Naive thymus-derived CD4-positive, alpha-beta T cell (primary cell): ENCODE measurements at regions of chr2 and their contacts with region 1.

Region 1: GRCh38 chr2:119759451-119760236 is at the start of gene PTPN4:
- DNase-seq: peak; percentile 88 to 98 (median 96)
- ATAC-seq: peak; percentile 97
- H3K4me3 ChIP-seq: peak within 1 kb of the TSS; percentile 89
- H3K4me3 Mint-ChIP-seq: peak within 1 kb of the TSS; percentile 87 to 97 (median 94)
- H3K27ac ChIP-seq: peak within 1 kb of the TSS; percentile 83
- H3K27ac Mint-ChIP-seq: peak within 1 kb of the TSS; percentile 60 to 95 (median 91)
- H3K4me1 ChIP-seq: peaks cover 25% of the 10 kb centered on the region in 2 donors
- H3K4me1 Mint-ChIP-seq: peaks cover 22 to 51% (median 39%) of the 10 kb centered on the region in 7 donors
- H3K27me3 ChIP-seq: no peaks in the 10 kb centered on the region
- H3K27me3 Mint-ChIP-seq: peaks cover 0 to 2% (median 0%) of the 10 kb centered on the region in 5 donors
- total RNA-seq, gene PTPN4: 59.9 to 122 (median 104) TPM

Region 2: DNA sequence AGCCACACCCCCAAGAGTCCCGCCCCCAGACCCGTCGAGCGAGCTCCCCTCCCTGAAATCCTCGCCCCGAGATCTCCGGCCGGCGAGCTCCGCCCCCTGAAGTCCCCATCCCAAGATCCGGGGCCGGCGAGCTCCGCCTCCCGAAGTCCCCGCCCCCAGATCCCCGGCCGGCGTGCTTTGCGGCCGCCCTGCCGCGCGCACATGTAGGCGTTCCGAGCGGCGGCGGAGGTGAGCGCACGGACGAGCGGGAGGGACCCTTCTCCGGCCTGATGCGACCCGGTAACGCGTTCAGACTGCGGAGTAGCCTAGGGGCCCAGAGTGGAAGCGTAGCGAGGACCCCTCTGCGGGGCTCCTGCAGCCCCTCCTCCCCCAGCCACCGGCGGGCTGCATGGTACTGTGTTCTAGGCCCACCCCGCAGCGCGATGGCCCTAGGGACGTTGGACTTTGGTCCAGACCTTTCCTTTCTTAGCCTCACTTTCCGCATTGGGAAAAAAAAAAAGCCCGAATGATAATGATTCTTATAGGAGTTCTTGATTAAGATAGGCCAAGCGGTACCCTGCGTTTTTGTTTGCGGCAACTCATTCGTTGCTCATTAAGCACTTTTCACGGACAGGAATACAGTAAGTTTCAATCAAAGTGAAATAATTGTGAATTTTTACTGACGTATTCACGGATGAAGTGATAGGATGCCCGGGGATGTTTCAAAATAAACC is 80.5 kb before region 1 on chr2 and contains the start of gene TMEM177:
- CTCF ChIA-PET with region 1: no interaction called
- POLR2A ChIA-PET with region 1: interaction called, 10 read pairs
- intact Hi-C with region 1: loop called (anchors 1 kb)
- DNase-seq: peak; percentile 72 to 96 (median 87)
- ATAC-seq: peak; percentile 91
- H3K4me3 ChIP-seq: peak within 1 kb of the TSS; percentile 95
- H3K4me3 Mint-ChIP-seq: peak within 1 kb of the TSS; percentile 87 to 96 (median 90)
- H3K27ac ChIP-seq: peak within 1 kb of the TSS; percentile 88
- H3K27ac Mint-ChIP-seq: peak within 1 kb of the TSS; percentile 58 to 99 (median 97)
- H3K4me1 ChIP-seq: peaks cover 0 to 15% of the 10 kb centered on the region in 2 donors
- H3K4me1 Mint-ChIP-seq: peaks cover 25 to 48% (median 38%) of the 10 kb centered on the region in 7 donors
- H3K27me3 ChIP-seq: no peaks in the 10 kb centered on the region
- H3K27me3 Mint-ChIP-seq: peaks cover 0 to 21% (median 0%) of the 10 kb centered on the region in 5 donors
- total RNA-seq, gene TMEM177: 5.5 to 38.1 (median 11.6) TPM

Region 3: DNA sequence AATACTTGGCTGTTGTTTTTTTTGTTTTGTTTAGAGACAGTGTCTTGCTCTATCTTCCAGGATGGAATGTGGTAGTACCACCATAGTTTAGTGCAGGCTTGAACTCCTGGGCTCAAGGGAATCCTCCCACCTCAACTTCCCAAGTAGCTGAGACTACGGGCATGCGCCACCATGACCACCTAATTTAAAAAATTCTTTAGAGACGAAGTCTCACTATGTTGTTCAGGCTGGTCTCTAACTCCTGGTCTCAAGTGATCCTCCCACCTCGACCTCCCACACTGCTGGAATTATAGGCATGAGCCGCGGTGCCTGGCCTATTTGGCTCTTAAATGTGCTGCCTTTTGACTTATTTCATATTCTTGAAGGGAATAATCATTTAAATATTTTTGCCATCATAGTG is 60.2 kb after region 1 on chr2:
- CTCF ChIA-PET with region 1: interaction called, 88 read pairs
- POLR2A ChIA-PET with region 1: interaction called, 16 read pairs
- intact Hi-C with region 1: loop called in 1 of 2 experiments (anchors 1 kb)
- DNase-seq: no peak
- ATAC-seq: no peak
- H3K4me3 ChIP-seq: no peak overlapping the region
- H3K4me3 Mint-ChIP-seq: no peak overlapping the region
- H3K27ac ChIP-seq: no peak overlapping the region
- H3K27ac Mint-ChIP-seq: peak overlapping the region in 6 of 9 donors; percentile 8 to 80 (median 34)
- H3K4me1 ChIP-seq: peaks cover 0 to 5% of the 10 kb centered on the region in 2 donors
- H3K4me1 Mint-ChIP-seq: peaks cover 16 to 72% (median 56%) of the 10 kb centered on the region in 7 donors
- H3K27me3 ChIP-seq: no peaks in the 10 kb centered on the region
- H3K27me3 Mint-ChIP-seq: no peaks in the 10 kb centered on the region

Region 4: GRCh38 chr2:120012771-120013596 is 253.3 kb after region 1 on chr2 and contains the start of gene EPB41L5:
- CTCF ChIA-PET with region 1: no interaction called
- POLR2A ChIA-PET with region 1: no interaction called
- intact Hi-C with region 1: loop called (anchors 1 kb)
- DNase-seq: peak; percentile 56 to 81 (median 67)
- ATAC-seq: peak; percentile 93
- H3K4me3 ChIP-seq: peak within 1 kb of the TSS; percentile 69
- H3K4me3 Mint-ChIP-seq: peak within 1 kb of the TSS; percentile 73 to 89 (median 86)
- H3K27ac ChIP-seq: peak within 1 kb of the TSS; percentile 70
- H3K27ac Mint-ChIP-seq: peak within 1 kb of the TSS in 8 of 9 donors; percentile 36 to 75 (median 70)
- H3K4me1 ChIP-seq: peaks cover 6% of the 10 kb centered on the region in 2 donors
- H3K4me1 Mint-ChIP-seq: peaks cover 8 to 37% (median 24%) of the 10 kb centered on the region in 7 donors
- H3K27me3 ChIP-seq: no peaks in the 10 kb centered on the region
- H3K27me3 Mint-ChIP-seq: peaks cover 0 to 20% (median 0%) of the 10 kb centered on the region in 5 donors
- total RNA-seq, gene EPB41L5: 2.2 to 9.3 (median 6.8) TPM

Region 5: DNA sequence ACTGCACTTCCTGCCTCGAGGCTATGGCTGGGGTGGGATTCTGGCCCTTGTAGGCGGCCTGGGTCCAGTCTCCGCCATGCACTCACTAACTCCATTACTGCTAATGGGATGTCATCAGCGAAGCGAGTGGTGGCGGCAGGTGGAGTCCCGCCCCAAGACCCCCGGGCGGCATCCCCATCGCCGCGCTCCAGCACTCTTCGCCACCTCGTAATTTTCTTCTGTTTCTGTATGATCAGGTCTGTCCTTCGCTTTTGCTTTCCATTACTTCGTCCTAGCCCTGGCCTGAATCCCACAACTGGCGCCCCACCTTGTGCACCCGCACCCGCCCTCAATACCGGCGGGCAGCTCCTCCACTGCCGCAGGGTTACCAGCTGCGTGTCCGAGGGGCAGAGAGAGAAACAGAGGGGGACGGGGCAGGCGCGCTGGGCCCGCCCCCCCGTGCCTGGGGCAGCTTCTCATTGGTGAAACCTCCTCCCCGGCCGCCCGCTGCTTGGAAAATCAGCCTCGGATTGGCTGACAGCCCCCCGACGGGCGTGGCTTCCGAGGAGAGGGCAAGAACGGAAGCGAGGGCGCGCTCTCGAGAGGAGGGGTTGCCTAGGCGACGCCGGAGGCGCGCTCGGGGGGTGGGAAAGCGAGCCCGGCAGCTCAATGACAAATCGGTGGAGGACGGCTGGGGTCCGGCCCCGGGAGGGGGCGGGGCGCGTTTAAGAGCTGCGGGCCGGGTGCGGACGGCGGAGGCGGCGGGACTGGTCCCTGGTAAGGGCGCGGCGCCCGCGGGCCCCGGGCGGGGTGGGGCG is 492.8 kb after region 1 on chr2 and contains the start of gene RALB:
- CTCF ChIA-PET with region 1: no interaction called
- POLR2A ChIA-PET with region 1: no interaction called
- intact Hi-C with region 1: loop called (anchors 1 kb)
- DNase-seq: peak; percentile 95 to 99 (median 97)
- ATAC-seq: peak; percentile 95
- H3K4me3 ChIP-seq: peak within 1 kb of the TSS; percentile 81
- H3K4me3 Mint-ChIP-seq: peak within 1 kb of the TSS; percentile 94 to 100 (median 98)
- H3K27ac ChIP-seq: peak within 1 kb of the TSS; percentile 76
- H3K27ac Mint-ChIP-seq: peak within 1 kb of the TSS; percentile 87 to 98 (median 95)
- H3K4me1 ChIP-seq: peaks cover 16% of the 10 kb centered on the region in 2 donors
- H3K4me1 Mint-ChIP-seq: peaks cover 29 to 72% (median 51%) of the 10 kb centered on the region in 7 donors
- H3K27me3 ChIP-seq: no peaks in the 10 kb centered on the region
- H3K27me3 Mint-ChIP-seq: peaks cover 0 to 9% (median 4%) of the 10 kb centered on the region in 5 donors
- total RNA-seq, gene RALB: 8.7 to 119 (median 11.6) TPM

Region 6: DNA sequence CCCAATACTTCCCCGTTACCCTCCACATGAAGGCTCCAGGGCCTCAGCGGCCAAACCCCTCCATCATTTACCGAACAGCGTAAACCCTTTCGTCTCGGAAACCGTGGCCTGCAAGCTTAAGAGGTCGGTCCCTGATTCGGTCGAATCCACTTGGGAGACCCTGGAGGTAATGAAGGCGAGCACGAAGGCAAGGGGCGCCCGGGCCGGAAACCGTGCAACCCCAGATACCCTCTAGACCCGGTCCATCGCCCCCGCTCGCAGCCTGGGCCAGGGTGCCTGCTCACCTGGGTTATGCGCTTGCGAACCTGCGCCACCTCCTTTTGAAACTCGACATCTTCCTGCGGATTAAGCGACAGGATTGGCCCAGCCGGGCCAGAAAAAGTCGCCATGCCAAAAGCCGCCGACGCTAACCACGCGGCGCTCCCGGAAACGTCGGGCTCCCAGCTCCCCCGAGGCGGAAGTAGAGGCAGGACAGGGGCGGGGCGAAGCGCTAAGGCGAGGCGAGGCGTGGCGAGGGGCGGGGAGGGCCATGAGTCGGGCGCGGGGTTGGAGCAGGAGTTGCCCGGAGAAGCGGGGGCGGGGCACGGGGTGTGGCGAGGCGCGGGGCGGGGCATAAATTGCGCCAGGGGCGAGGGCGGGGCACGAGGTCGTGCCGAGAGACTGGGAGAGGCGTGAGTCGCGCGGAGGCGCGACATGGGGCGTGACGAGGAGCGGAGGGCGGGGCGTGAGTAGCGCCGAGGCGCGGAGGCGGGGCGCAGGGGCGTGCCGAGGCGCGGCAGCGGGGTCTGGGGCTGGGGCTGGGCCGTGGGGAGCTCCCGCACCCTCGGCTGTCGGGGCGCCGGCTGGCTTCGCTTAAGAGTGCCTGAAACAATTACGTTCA is 1977.1 kb after region 1 on chr2 and contains the start of gene NIFK:
- CTCF ChIA-PET with region 1: no interaction called
- POLR2A ChIA-PET with region 1: no interaction called
- intact Hi-C with region 1: loop called in 1 of 2 experiments (anchors 2 kb)
- DNase-seq: peak; percentile 98 to 100 (median 99)
- ATAC-seq: peak; percentile 96
- H3K4me3 ChIP-seq: peak within 1 kb of the TSS; percentile 80
- H3K4me3 Mint-ChIP-seq: peak within 1 kb of the TSS; percentile 81 to 99 (median 95)
- H3K27ac ChIP-seq: peak within 1 kb of the TSS; percentile 89
- H3K27ac Mint-ChIP-seq: peak within 1 kb of the TSS; percentile 85 to 99 (median 97)
- H3K4me1 ChIP-seq: peaks cover 13 to 19% of the 10 kb centered on the region in 2 donors
- H3K4me1 Mint-ChIP-seq: peaks cover 17 to 54% (median 38%) of the 10 kb centered on the region in 7 donors
- H3K27me3 ChIP-seq: no peaks in the 10 kb centered on the region
- H3K27me3 Mint-ChIP-seq: no peaks in the 10 kb centered on the region
- total RNA-seq, gene NIFK: 35.3 to 88.1 (median 71.9) TPM